Activated CD8-positive, alpha-beta T cell treated with anti-CD3 and anti-CD28 coated beads for 36 hours (primary cell): ENCODE measurements at regions of chr3 and their contacts with region 1.

Region 1: DNA sequence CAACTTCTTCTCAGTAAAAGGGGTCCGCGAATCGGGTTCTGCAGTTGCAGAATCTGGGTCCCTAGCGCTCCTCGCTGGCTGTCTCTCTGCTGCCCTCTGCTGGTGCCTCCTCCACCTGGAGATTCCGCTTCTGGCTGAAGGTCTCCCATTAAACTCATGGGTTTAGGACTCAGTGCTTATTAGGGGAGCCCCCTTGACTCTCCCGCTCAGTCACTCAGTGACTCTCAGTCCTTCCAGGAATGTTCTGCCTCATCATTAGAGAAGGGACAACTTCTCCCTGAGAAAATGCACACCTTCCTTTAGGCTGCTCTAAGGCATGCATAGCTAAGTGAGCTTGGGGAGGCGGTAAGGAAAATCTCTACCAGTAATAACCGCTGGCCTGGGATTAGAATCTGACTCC is 7.1 kb downstream of the CPN2 start:
- DNase-seq: peak; percentile 84
- ATAC-seq: peak; percentile 79
- H3K4me3 Mint-ChIP-seq: no peak overlapping the region
- H3K27ac Mint-ChIP-seq: no peak overlapping the region
- H3K4me1 Mint-ChIP-seq: no peaks in the 10 kb centered on the region
- H3K27me3 Mint-ChIP-seq: peaks cover 2% of the 10 kb centered on the region
- CTCF ChIP-seq: peak; percentile 89

Region 2: GRCh38 chr3:193780810-193781472 is 563.1 kb before region 1 on chr3:
- CTCF ChIA-PET with region 1: interaction called, 12 read pairs
- POLR2A ChIA-PET with region 1: no interaction called
- intact Hi-C with region 1: no loop called
- DNase-seq: peak; percentile 44
- ATAC-seq: peak; percentile 39
- H3K4me3 Mint-ChIP-seq: no peak overlapping the region
- H3K27ac Mint-ChIP-seq: no peak overlapping the region
- H3K4me1 Mint-ChIP-seq: peaks cover 4% of the 10 kb centered on the region
- H3K27me3 Mint-ChIP-seq: peaks cover 31% of the 10 kb centered on the region
- CTCF ChIP-seq: peak; percentile 64

Region 3: DNA sequence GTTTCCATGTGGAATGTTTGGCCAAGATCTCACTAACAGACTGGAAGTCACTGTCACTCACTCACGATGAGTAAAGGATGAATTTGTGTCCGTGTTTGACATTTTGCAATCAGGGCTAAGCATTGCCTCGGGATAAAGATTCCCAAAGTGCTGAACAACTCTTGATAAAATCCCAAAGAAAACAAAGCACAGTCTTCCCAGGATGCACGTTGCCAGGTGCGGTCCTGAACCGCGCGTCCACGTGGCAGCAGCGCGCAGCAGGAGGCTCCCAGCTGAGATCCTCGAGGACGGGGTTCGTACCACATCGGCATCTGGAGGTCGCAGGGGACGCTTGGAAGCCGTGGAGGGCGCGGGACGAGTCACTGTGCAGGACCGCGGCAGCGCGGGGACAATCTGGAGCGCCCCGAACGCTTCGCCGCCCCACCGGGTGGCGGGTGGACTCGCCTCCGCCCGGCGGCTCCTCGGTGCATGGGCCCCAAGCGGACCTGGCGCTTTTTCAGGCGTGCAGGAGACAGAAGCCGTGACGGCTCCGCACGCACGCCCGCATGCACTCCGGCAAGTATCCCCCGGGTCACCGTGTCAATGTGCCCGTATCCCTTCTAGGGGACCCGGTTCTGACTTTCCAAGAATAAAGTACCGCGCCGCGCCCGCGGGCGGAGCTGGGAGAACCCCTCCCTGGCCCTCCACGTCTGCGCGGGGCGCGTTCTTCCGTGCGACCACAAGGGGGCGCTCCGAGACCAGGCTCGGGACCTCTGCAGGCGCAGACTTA is 10.6 kb before region 1 on chr3:
- CTCF ChIA-PET with region 1: interaction called, 69 read pairs
- POLR2A ChIA-PET with region 1: no interaction called
- intact Hi-C with region 1: no loop called
- DNase-seq: peak; percentile 89
- ATAC-seq: peak; percentile 98
- H3K4me3 Mint-ChIP-seq: peak overlapping the region; percentile 72
- H3K27ac Mint-ChIP-seq: no peak overlapping the region
- H3K4me1 Mint-ChIP-seq: no peaks in the 10 kb centered on the region
- H3K27me3 Mint-ChIP-seq: peaks cover 21% of the 10 kb centered on the region
- CTCF ChIP-seq: peak; percentile 99

Region 4: DNA sequence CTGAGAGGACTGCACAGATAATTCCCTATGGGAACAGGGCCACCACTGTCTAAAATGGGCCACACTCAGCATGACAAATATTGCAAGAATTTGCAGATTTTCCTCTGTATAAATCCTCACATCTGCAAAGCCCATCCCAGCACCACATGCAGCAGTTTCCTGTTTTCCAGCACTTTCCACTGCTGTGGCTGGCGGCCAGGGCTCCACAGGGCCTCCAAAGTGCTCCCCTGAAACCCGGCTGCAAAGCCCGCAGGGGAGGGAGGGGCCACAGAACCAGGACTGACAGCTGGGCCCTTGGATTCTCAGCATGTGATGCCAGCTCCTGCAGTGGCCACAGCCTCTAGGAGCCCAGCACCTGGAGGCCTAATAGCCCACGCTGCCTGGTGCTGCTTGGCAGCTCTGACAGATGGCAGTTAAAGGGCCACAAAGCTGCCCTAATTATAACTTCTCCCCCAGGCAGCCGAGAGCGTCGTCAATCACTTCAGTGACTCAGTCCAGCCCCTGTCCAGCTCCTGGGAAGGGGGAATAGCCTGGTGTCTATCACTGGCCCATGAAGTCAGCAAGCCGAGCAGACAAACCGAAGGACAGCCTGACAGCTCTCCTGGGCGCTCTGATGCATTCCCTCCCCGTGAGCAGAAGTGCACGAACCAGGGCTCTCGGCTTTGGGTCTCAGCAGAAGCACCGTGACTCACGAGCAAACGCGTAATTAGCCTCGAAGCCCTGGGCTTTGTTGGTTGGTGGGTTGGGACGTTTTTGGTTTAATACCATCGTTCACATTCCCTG is 20.8 kb after region 1 on chr3:
- CTCF ChIA-PET with region 1: interaction called, 22 read pairs
- POLR2A ChIA-PET with region 1: no interaction called
- intact Hi-C with region 1: no loop called
- DNase-seq: no peak
- ATAC-seq: no peak
- H3K4me3 Mint-ChIP-seq: no peak overlapping the region
- H3K27ac Mint-ChIP-seq: no peak overlapping the region
- H3K4me1 Mint-ChIP-seq: no peaks in the 10 kb centered on the region
- H3K27me3 Mint-ChIP-seq: peaks cover 20% of the 10 kb centered on the region
- CTCF ChIP-seq: no peak

Region 5: DNA sequence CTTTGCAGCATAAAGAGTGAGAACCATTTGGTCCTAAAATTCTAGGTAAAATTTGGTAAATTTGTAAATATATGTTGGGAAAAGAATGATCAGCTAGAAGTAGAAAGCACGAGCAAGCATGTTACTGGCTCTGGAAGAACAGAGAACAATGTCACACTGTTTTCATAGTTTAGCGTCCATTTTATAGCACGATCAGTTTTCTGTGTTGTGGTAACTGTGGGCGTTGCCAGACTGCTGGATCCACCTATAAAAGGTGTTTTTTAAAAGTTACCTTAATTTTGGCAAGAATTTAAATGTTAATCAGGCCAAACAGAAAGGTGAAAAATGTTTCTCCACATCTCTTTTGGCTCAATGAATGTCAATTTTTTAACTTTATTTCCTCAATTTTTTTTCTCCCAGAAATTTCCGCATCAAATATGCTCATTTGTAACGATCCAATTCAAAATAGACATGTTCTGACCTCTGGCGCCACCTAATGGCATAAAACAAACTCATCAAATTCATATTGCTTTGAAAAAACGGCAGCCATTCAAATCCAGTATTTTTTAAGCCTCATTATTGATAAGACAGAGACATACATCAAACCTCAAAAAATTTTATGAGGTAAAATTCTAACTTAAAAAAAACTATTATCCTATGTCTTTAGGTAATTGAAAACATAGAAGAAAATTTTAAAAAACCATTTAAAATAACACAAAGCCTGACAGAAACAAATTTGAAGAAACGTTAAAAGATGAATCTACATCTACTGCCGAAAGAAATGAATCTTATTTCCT is 60.5 kb after region 1 on chr3:
- CTCF ChIA-PET with region 1: interaction called, 188 read pairs
- POLR2A ChIA-PET with region 1: no interaction called
- intact Hi-C with region 1: no loop called
- DNase-seq: peak; percentile 60
- ATAC-seq: no peak
- H3K4me3 Mint-ChIP-seq: no peak overlapping the region
- H3K27ac Mint-ChIP-seq: peak overlapping the region; percentile 25
- H3K4me1 Mint-ChIP-seq: peaks cover 10% of the 10 kb centered on the region
- H3K27me3 Mint-ChIP-seq: no peaks in the 10 kb centered on the region
- CTCF ChIP-seq: peak; percentile 91

Region 6: DNA sequence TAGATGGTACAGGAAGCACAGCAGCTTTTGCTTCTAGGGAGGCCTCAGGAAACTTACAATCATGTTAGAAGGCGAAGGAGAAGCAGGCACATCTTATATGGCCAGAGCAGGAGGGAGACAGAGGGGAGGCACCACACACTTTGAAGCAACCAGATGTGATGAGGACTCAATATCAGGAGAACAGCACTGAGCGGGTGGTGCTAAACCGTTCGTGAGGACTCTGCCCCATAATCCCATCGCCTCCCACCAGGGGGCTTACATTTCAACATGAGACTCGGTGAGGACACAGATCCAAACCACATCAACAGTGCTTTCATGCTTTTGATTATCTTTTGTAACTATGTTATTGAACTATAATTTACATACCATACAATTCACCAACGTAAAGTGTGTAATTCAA is 296.8 kb after region 1 on chr3:
- CTCF ChIA-PET with region 1: no interaction called
- POLR2A ChIA-PET with region 1: no interaction called
- intact Hi-C with region 1: no loop called
- DNase-seq: peak; percentile 61
- ATAC-seq: peak; percentile 86
- H3K4me3 Mint-ChIP-seq: no peak overlapping the region
- H3K27ac Mint-ChIP-seq: no peak overlapping the region
- H3K4me1 Mint-ChIP-seq: peaks cover 6% of the 10 kb centered on the region
- H3K27me3 Mint-ChIP-seq: no peaks in the 10 kb centered on the region
- CTCF ChIP-seq: peak; percentile 57